ENCODE measurements at regions of chr5 and their contacts with region 1.

Region 1: GRCh38 chr5:56270568-56271392 is 37.6 kb upstream of the ANKRD55 start:
- H3K4me3 Mint-ChIP-seq: no peak overlapping the region
- H3K27ac Mint-ChIP-seq: peak overlapping the region; percentile 54
- H3K4me1 Mint-ChIP-seq: peaks cover 24% of the 10 kb centered on the region
- H3K27me3 Mint-ChIP-seq: no peaks in the 10 kb centered on the region

Region 2: DNA sequence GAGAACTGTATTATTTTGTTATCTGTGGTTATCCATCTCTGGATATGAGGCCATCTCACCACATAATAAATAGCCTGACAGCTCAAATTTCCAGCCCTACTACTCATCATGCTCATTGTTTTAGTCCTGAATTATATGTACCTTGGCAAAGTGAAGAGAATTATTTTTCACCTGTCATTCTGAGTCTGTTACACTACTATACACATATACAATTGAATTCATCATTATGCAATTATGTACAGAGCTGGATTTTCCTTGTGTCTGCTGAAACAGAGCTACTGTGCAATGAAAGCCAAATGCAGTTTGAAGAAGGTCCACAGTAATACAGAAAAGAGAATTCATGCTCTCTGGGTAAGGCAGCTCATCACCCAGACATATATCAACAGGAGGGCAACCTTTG is 1313.9 kb before region 1 on chr5:
- intact Hi-C with region 1: no loop called
- H3K4me3 Mint-ChIP-seq: no peak overlapping the region
- H3K27ac Mint-ChIP-seq: no peak overlapping the region
- H3K4me1 Mint-ChIP-seq: peaks cover 5% of the 10 kb centered on the region
- H3K27me3 Mint-ChIP-seq: peaks cover 5% of the 10 kb centered on the region

Region 3: DNA sequence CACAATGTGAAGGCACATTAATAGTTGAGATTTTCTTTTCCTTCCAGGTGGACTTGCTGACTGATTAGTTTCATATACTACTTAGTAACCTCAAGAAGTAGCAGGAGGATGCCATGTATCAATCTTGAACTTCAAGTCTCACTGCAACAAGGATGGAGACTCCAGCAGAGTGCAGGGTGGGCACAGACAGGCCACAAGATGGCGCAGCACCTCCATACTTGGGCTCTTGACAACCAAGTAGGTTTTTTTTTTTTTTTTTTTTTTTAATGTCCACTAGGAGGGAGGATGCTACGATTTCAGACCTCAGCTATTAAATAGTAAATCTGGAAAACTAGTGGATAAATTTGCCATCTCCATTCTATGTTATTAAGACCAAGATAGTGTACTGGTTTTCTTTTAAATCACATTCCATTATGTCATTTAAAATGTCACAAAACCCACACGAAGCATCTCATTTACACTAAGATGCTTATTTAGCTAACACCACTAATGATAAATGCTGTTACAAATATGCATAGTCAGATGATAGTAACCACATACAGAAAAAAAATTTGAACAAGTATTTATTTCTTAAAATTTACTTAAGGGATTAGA is 334.6 kb before region 1 on chr5:
- intact Hi-C with region 1: loop called (anchors 2 kb)
- H3K4me3 Mint-ChIP-seq: no peak overlapping the region
- H3K27ac Mint-ChIP-seq: no peak overlapping the region
- H3K4me1 Mint-ChIP-seq: no peaks in the 10 kb centered on the region
- H3K27me3 Mint-ChIP-seq: no peaks in the 10 kb centered on the region

Region 4: GRCh38 chr5:56460679-56461191 is 190.0 kb after region 1 on chr5:
- intact Hi-C with region 1: loop called (anchors 10 kb)
- H3K4me3 Mint-ChIP-seq: no peak overlapping the region
- H3K27ac Mint-ChIP-seq: no peak overlapping the region
- H3K4me1 Mint-ChIP-seq: peaks cover 30% of the 10 kb centered on the region
- H3K27me3 Mint-ChIP-seq: no peaks in the 10 kb centered on the region

Region 5: GRCh38 chr5:56838409-56839039 is 567.7 kb after region 1 on chr5:
- intact Hi-C with region 1: loop called (anchors 1 kb)
- H3K4me3 Mint-ChIP-seq: no peak overlapping the region
- H3K27ac Mint-ChIP-seq: peak overlapping the region; percentile 74
- H3K4me1 Mint-ChIP-seq: peaks cover 81% of the 10 kb centered on the region
- H3K27me3 Mint-ChIP-seq: no peaks in the 10 kb centered on the region

Region 6: DNA sequence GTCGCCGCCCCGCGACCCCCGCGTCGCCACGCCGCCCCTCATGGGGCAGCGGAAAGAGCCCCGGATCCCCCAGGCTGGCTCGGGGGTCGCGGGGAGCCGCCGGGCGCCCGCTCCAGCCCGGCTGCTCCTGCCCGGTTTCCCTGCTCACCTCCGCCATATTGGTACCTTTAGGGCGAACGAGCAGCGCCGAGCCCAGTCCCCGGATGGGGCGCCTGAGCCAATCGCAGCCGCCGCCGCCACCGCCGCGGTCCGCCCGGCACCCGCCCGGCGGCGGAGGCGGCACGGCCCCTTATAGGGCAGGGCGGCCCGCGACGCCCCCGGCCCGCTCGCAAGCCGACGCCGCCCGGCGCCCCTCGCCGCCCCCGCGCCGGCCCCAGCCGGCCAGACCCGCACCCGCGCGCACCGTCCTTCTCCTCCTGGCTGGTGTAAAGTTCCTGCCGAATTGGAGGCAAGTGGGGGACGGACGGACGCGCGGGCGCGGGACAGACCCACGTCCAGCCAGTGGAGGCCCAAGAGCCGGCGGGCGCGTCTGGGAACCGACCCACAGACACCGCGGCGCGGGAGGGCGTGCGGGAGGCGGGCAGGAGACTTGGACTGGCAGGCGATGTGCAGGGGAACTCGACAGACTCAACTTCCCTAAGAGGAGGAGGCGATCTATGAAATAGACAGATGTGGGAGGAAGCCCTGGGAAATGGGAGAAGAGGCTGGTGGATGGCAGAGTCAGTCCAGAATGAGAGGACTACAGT is 681.3 kb after region 1 on chr5 and contains the start of gene MIER3:
- intact Hi-C with region 1: no loop called
- H3K4me3 Mint-ChIP-seq: peak within 1 kb of the TSS; percentile 89
- H3K27ac Mint-ChIP-seq: peak within 1 kb of the TSS; percentile 71
- H3K4me1 Mint-ChIP-seq: peaks cover 18% of the 10 kb centered on the region
- H3K27me3 Mint-ChIP-seq: peaks cover 16% of the 10 kb centered on the region

Region 7: GRCh38 chr5:57137401-57137800 is 866.6 kb after region 1 on chr5:
- intact Hi-C with region 1: loop called (anchors 5 kb)
- H3K4me3 Mint-ChIP-seq: no peak overlapping the region
- H3K27ac Mint-ChIP-seq: no peak overlapping the region
- H3K4me1 Mint-ChIP-seq: no peaks in the 10 kb centered on the region
- H3K27me3 Mint-ChIP-seq: no peaks in the 10 kb centered on the region

Measured in dendritic cell treated with granulocyte-macrophage colony-stimulating factor and Interleukin-4, amounts not matched to agents 40 ng/mL and 50 ng/mL, for 4 days (primary cell).